ENCODE measurements at regions of chr2 and their contacts with region 1.

Region 1: DNA sequence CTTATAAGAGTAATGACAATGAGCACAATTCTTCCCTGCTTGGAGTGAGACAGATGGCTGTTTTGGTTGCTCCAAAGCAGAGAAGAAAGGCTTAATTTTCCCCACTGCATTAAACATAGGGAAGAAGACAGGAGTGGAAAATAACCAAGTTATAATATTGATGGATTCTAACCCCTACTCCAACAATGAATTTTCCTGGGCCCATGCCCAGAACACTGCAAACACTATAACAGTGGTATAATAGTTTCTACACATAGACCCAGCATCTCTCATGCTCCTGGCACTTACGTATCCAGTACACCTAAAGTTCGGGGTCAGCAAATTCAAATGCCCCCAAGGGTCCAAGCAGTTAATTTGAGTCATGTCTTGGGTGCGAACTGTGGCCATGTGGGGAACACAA is 613.4 kb downstream of the PLCL1 start:
- DNase-seq: no peak
- H3K4me3 ChIP-seq: no peak overlapping the region
- H3K27ac ChIP-seq: no peak overlapping the region
- H3K4me1 ChIP-seq: no peaks in the 10 kb centered on the region
- H3K27me3 ChIP-seq: peaks cover 15% of the 10 kb centered on the region
- CTCF ChIP-seq: no peak

Region 2: DNA sequence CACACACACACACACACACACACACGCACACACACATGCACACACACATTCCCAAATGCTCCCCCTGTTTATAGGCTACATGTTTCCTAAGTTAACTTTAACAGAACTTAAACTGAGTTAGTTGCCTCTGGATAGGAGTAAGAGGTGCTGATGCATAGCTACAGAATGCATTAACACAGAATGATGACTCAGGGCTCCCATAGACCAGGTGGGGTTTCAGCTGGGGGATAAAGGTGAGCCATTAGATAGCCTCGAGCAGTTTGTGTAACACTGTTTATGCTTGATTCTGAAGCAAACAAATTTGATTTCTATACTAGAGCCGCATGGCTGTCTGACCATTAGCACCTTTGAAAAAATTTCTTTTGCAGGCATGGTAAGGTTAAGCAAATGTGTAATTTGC is 127.6 kb after region 1 on chr2:
- CTCF ChIA-PET with region 1: no interaction called
- POLR2A ChIA-PET with region 1: interaction called, 14 read pairs
- intact Hi-C with region 1: no loop called
- DNase-seq: no peak
- H3K4me3 ChIP-seq: no peak overlapping the region
- H3K27ac ChIP-seq: no peak overlapping the region
- H3K4me1 ChIP-seq: no peaks in the 10 kb centered on the region
- H3K27me3 ChIP-seq: peaks cover 7% of the 10 kb centered on the region
- CTCF ChIP-seq: no peak